A549 (cell line): ENCODE measurements at regions of chr12 and their contacts with region 1.

Region 1: GRCh38 chr12:64696080-64696741 is 63.0 kb downstream of the GNS start:
- DNase-seq: peak; percentile 42 to 53
- ATAC-seq: peak; percentile 11 to 45; a peak in 3 of 6 replicates
- H3K4me3 ChIP-seq: no peak overlapping the region
- H3K27ac ChIP-seq: peak overlapping the region; percentile 38 to 49; a peak in 5 of 6 replicates
- H3K4me1 ChIP-seq: peaks cover 21% of the 10 kb centered on the region
- CTCF ChIP-seq: peak; percentile 78
- EP300 ChIP-seq: no peak
- POLR2A ChIP-seq: no peak
- RAD21 ChIP-seq: peak; percentile 82 to 92

Region 2: DNA sequence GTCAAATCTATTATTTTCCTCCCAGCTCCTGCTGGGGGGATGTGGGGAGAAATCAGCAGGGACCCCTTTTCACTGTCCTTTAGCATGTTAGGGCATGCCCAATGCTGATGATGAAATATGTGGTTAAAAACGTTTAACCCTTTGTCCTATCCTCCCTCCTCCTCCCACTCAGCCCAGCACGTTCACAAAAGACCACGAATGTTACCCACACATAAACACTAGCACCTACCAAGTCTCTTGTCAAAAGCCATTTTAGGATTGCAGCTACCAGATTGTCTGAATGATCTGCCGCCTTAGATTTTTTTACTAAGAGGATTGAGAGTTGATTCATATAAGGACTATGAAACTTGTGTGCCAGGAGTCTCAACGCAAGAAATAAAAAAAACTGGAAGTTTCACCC is 173.9 kb before region 1 on chr12:
- CTCF ChIA-PET with region 1: interaction called, 17 read pairs
- POLR2A ChIA-PET with region 1: no interaction called
- DNase-seq: no peak
- ATAC-seq: no peak
- H3K4me3 ChIP-seq: no peak overlapping the region
- H3K27ac ChIP-seq: peak overlapping the region; percentile 26 to 64; a peak in 3 of 6 replicates
- H3K4me1 ChIP-seq: peaks cover 8% of the 10 kb centered on the region; the same call in 1 of the 3 replicates
- CTCF ChIP-seq: no peak
- EP300 ChIP-seq: no peak
- POLR2A ChIP-seq: no peak
- RAD21 ChIP-seq: no peak

Region 3: DNA sequence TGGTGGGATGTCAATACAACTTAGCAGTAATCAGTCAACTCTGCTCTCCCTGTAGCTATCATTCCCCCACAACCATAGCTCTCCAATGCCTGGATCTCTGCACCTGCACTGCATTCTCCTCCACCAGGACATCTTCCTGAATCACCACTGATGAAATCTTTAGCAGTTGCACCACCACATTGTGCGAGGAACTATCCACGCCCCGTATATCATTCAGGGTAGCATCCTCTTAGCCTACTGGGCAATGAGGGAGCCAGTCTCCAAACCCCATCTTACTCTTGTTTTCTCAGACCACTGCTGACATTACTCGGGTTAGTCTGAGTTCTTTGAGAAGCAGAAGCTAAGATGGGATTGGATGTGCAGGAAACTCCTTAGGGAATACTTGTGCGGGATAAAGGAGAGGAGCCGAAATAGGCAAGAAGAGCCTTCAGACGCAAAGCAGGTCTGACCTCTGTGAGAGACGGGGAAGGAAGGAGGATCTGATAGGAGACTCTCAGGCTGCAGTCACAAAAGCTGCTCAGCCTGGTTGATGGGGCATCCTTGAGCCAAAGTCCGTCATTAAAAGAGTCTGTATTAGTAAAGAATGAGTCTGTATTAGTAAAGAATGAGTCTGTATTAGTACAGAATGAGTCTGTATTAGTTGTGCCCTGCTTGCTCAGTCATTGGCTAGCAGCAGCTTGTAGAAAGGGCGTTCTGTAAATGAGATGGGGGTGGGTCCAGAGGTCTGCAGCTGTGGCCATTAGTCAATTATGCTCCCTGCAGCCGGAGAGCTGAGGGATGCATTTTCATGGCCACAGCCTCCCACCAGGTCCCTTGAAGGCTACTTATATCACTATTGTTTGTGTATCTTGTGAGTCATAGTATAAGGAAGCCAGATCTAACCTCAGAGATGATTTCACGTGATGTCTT is 135.6 kb before region 1 on chr12:
- CTCF ChIA-PET with region 1: interaction called, 342 read pairs
- POLR2A ChIA-PET with region 1: no interaction called
- DNase-seq: peak; percentile 61 to 67
- ATAC-seq: peak; percentile 92 to 93
- H3K4me3 ChIP-seq: no peak overlapping the region
- H3K27ac ChIP-seq: peak overlapping the region in 1 of 2 experiments; percentile 23; a peak in 2 of 6 replicates
- H3K4me1 ChIP-seq: peaks cover 19% of the 10 kb centered on the region
- CTCF ChIP-seq: no peak
- EP300 ChIP-seq: no peak
- POLR2A ChIP-seq: no peak
- RAD21 ChIP-seq: no peak

Region 4: GRCh38 chr12:64610149-64610678 is 86.0 kb before region 1 on chr12 and contains the start of gene RASSF3:
- CTCF ChIA-PET with region 1: interaction called, 123 read pairs
- POLR2A ChIA-PET with region 1: interaction called, 12 read pairs
- DNase-seq: peak; percentile 53 to 71
- ATAC-seq: peak; percentile 60 to 68
- H3K4me3 ChIP-seq: peak within 1 kb of the TSS; percentile 73
- H3K27ac ChIP-seq: peak within 1 kb of the TSS; percentile 83 to 96
- H3K4me1 ChIP-seq: peaks cover 19% of the 10 kb centered on the region
- CTCF ChIP-seq: no peak
- EP300 ChIP-seq: no peak
- POLR2A ChIP-seq: peak; percentile 54
- RAD21 ChIP-seq: no peak
- polyA plus RNA-seq, gene RASSF3: 35.4 and 40.1 TPM in 2 replicates

Region 5: GRCh38 chr12:64706306-64706705 is 10.1 kb after region 1 on chr12:
- CTCF ChIA-PET with region 1: interaction called, 45 read pairs
- POLR2A ChIA-PET with region 1: no interaction called
- DNase-seq: no peak
- ATAC-seq: peak; percentile 42 to 46; a peak in 4 of 6 replicates
- H3K4me3 ChIP-seq: no peak overlapping the region
- H3K27ac ChIP-seq: no peak overlapping the region
- H3K4me1 ChIP-seq: no peaks in the 10 kb centered on the region
- CTCF ChIP-seq: no peak
- EP300 ChIP-seq: no peak
- POLR2A ChIP-seq: no peak
- RAD21 ChIP-seq: no peak

Region 6: GRCh38 chr12:64746663-64747062 is 50.5 kb after region 1 on chr12:
- CTCF ChIA-PET with region 1: no interaction called
- POLR2A ChIA-PET with region 1: no interaction called
- DNase-seq: no peak
- ATAC-seq: no peak
- H3K4me3 ChIP-seq: no peak overlapping the region
- H3K27ac ChIP-seq: no peak overlapping the region
- H3K4me1 ChIP-seq: peaks cover 21% of the 10 kb centered on the region
- CTCF ChIP-seq: no peak
- EP300 ChIP-seq: no peak
- POLR2A ChIP-seq: no peak
- RAD21 ChIP-seq: no peak